WTC11 (cell line): ENCODE measurements at regions of chr7 and their contacts with region 1.

Region 1: DNA sequence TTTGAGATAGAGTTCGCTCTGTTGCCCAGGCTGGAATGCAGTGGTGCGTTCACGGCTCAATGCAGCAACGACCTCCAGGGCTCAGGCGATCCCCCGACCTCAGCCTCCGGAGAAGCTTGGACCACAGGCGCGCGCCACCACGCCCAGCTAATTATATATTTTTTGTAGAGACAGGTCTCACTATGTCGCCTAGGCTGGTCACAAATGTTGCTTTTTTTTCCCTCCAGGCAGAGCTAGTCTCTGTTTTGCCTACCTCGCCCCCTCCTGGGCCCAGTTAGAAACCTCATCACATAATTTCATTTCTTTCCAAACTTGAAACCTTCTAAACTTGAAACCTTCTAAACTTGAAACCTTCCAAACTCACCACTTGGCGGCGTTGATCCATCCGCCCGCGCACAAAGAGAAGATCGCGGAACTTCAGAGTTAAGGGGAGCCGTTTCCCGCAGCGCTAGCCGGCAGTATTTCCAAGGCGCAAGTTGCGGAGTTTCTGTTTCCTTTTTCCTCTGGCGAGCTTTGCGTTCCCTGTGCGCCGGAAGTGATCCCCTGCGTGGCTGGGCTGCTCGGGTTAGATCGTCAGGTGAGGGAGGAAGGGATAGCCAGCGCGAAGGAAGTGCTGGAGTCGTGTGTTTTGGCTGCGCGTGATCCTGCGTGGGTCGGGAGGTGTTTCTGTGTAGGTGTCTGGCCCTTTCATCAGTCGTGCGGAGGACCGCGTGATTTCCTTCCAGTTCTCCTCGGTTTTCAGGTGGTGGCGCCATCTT is at the start of gene SSBP1:
- DNase-seq: peak; percentile 90
- ATAC-seq: peak; percentile 85
- H3K4me3 Mint-ChIP-seq: peak within 1 kb of the TSS; percentile 95
- H3K27ac Mint-ChIP-seq: peak within 1 kb of the TSS; percentile 98
- H3K4me1 Mint-ChIP-seq: peaks cover 25% of the 10 kb centered on the region
- H3K27me3 Mint-ChIP-seq: no peaks in the 10 kb centered on the region
- CTCF ChIP-seq: no peak; the same call in 1 of the 2 replicates
- total RNA-seq, gene SSBP1: 221 to 245 TPM (median 222 TPM) in 3 replicates

Region 2: DNA sequence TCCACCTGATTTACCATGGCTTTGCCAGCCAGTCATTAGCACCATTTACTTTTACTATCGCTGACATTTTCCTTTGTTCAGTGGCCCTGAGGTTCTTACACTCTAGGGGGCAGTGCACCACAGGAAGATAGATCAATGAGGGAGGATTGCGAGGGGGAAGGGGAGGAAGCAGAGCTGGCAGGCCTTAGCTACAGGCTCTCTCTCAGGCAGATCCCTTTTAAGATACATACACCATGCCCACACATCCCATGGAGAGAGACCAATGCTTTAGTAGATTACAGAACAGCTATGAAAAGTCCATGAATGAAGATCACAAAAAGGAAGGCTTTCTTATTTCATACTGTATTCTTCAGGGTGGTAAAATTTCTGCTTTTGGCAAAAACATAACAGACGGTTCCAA is 83.5 kb before region 1 on chr7:
- CTCF ChIA-PET with region 1: interaction called, 19 read pairs
- POLR2A ChIA-PET with region 1: no interaction called
- DNase-seq: peak; percentile 57
- ATAC-seq: peak; percentile 82
- H3K4me3 Mint-ChIP-seq: no peak overlapping the region
- H3K27ac Mint-ChIP-seq: peak overlapping the region; percentile 48; the same call in 1 of the 2 replicates
- H3K4me1 Mint-ChIP-seq: peaks cover 28% of the 10 kb centered on the region
- H3K27me3 Mint-ChIP-seq: no peaks in the 10 kb centered on the region
- CTCF ChIP-seq: peak; percentile 29; the same call in 1 of the 2 replicates

Region 3: DNA sequence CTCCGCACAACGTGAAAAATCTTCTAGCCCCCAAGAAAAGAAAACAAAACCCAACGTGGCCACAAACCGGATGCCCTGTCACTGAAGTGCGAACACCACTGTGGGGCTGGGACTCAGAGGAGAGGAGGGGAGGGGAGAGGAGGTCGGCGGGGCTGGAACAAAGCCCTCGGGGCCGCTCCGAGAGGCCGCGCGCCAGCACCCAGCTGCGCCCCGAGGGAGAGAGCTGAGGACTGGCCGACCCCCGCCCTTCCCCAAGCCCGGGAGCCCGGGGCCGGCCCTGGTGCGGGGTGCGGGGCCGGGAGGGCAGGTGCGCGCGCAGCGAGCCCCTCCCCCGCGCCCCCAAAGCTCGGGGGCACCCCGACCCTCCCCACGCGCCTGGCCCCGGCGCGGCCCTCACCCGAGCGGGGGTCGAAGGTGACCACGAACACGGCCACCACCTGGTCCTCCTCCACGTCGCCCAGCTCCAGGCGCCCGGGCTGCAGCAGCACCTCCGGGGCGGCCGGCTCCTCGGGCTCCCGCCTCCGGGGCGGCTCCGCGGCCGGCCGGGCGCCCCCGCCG is 36.4 kb before region 1 on chr7:
- CTCF ChIA-PET with region 1: interaction called, 20 read pairs
- POLR2A ChIA-PET with region 1: interaction called, 6 read pairs
- DNase-seq: peak; percentile 55
- ATAC-seq: peak; percentile 76
- H3K4me3 Mint-ChIP-seq: peak overlapping the region; percentile 64
- H3K27ac Mint-ChIP-seq: no peak overlapping the region
- H3K4me1 Mint-ChIP-seq: peaks cover 45% of the 10 kb centered on the region
- H3K27me3 Mint-ChIP-seq: peaks cover 18% of the 10 kb centered on the region
- CTCF ChIP-seq: no peak

Region 4: GRCh38 chr7:141715794-141716689 is 22.0 kb before region 1 on chr7:
- CTCF ChIA-PET with region 1: interaction called, 26 read pairs
- POLR2A ChIA-PET with region 1: no interaction called
- DNase-seq: no peak
- ATAC-seq: peak; percentile 75
- H3K4me3 Mint-ChIP-seq: peak overlapping the region; percentile 39
- H3K27ac Mint-ChIP-seq: no peak overlapping the region
- H3K4me1 Mint-ChIP-seq: peaks cover 33% of the 10 kb centered on the region
- H3K27me3 Mint-ChIP-seq: no peaks in the 10 kb centered on the region
- CTCF ChIP-seq: no peak

Region 5: GRCh38 chr7:141722529-141722928 is 15.5 kb before region 1 on chr7:
- CTCF ChIA-PET with region 1: interaction called, 11 read pairs
- POLR2A ChIA-PET with region 1: interaction called, 3 read pairs
- DNase-seq: no peak
- ATAC-seq: no peak
- H3K4me3 Mint-ChIP-seq: no peak overlapping the region
- H3K27ac Mint-ChIP-seq: no peak overlapping the region
- H3K4me1 Mint-ChIP-seq: peaks cover 13% of the 10 kb centered on the region
- H3K27me3 Mint-ChIP-seq: peaks cover 3% of the 10 kb centered on the region; the same call in 1 of the 2 replicates
- CTCF ChIP-seq: no peak